ENCODE measurements at regions of chr15 and their contacts with region 1.

Region 1: DNA sequence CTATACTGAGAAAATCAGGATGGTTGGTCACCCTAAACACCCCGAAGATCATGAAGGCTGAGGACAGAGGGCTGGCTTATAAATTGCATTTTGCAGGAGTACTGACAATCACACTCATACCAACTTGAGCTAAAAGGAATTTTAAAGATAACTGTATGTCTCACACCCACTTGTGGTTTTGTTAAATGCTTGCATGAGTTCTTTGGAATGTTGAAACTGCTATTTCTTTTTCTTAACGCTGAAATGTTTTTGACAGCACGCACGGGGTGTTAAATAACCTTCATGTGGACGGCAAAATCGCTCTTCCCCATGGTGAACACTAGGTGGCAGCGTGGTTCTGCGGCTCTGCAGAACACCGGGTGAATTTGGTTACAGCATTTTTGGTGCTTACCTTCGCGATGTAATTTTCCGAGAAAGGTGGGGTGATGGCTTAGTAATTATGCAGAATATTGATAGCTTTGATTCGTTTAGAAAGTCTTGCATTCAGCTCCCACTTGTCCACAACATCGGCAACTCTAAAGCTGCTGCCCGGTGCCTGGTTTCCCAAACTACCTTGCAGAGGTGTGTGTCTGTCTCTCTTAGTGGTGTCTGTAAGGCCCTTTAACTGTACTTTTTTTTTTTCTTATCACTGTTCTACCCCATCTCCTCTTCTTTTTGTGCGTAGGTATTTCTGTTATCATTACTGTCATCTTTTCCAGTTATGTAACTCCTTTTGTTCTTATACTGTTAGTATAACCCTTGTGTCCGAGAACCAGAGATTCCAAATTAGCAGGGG is 51.7 kb downstream of the ARNT2 start:
- DNase-seq: peak; percentile 67 to 92
- H3K4me3 ChIP-seq: no peak overlapping the region
- H3K27ac ChIP-seq: peak overlapping the region; percentile 33; the same call in 1 of the 2 replicates
- H3K4me1 ChIP-seq: peaks cover 23% of the 10 kb centered on the region
- H3K27me3 ChIP-seq: no peaks in the 10 kb centered on the region
- CTCF ChIP-seq: peak; percentile 94

Region 2: DNA sequence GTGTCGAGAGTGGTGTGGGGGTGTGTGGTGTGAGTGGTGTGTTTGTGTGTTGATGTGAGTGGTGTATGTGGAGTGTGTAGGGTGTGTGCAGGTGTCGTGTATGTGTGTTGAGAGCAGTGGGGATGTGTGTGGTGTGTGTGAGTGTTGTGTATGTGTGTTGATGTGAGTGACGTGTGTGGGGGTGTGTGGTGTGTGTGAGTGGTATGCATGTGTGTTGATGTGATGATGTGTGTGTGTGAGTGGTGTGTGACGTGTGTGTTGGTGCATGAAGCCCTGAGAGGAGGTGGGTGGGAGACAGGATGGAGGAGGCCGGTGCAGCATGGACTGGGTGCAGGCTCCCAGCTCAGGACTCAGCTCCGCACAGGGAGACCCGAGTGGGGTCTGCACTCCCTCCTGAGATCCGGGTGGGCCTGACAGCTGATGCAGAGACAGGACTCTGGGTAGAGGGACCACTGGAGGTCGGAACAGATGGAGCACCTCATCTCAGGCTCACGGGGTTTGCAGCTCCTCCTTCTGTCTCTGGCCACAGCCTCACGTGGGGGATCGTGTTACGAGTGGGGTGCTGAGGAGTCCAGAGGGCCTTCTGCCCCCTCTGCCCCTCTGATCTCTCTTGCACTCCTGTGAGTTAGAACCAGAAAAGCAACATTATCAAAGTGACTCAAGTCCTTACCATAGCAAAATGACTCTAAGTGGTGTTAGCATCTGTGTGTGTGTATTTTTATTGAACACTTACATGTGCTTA is 10.4 kb before region 1 on chr15:
- CTCF ChIA-PET with region 1: no interaction called
- POLR2A ChIA-PET with region 1: no interaction called
- intact Hi-C with region 1: no loop called
- DNase-seq: no peak
- H3K4me3 ChIP-seq: no peak overlapping the region
- H3K27ac ChIP-seq: no peak overlapping the region
- H3K4me1 ChIP-seq: peaks cover 5% of the 10 kb centered on the region; the same call in 1 of the 2 replicates
- H3K27me3 ChIP-seq: no peaks in the 10 kb centered on the region
- CTCF ChIP-seq: no peak

Region 3: GRCh38 chr15:80512726-80513660 is 57.1 kb after region 1 on chr15:
- CTCF ChIA-PET with region 1: no interaction called
- POLR2A ChIA-PET with region 1: no interaction called
- intact Hi-C with region 1: loop called (anchors 5 kb)
- DNase-seq: peak in 1 of 2 experiments; percentile 2
- H3K4me3 ChIP-seq: no peak overlapping the region
- H3K27ac ChIP-seq: no peak overlapping the region
- H3K4me1 ChIP-seq: no peaks in the 10 kb centered on the region
- H3K27me3 ChIP-seq: peaks cover 9% of the 10 kb centered on the region; the same call in 1 of the 2 replicates
- CTCF ChIP-seq: peak; percentile 58; the same call in 1 of the 2 replicates

Region 4: GRCh38 chr15:80588801-80589200 is 132.9 kb after region 1 on chr15:
- CTCF ChIA-PET with region 1: interaction called, 4 read pairs
- POLR2A ChIA-PET with region 1: interaction called, 7 read pairs
- intact Hi-C with region 1: loop called (anchors 1 kb)
- DNase-seq: peak; percentile 34 to 99
- H3K4me3 ChIP-seq: no peak overlapping the region
- H3K27ac ChIP-seq: peak overlapping the region; percentile 90
- H3K4me1 ChIP-seq: peaks cover 51% of the 10 kb centered on the region
- H3K27me3 ChIP-seq: no peaks in the 10 kb centered on the region
- CTCF ChIP-seq: no peak

Region 5: GRCh38 chr15:80776420-80777045 is 320.7 kb after region 1 on chr15:
- CTCF ChIA-PET with region 1: interaction called, 3 read pairs
- POLR2A ChIA-PET with region 1: interaction called, 3 read pairs
- intact Hi-C with region 1: loop called (anchors 1 kb)
- DNase-seq: peak in 1 of 2 experiments; percentile 14
- H3K4me3 ChIP-seq: no peak overlapping the region
- H3K27ac ChIP-seq: peak overlapping the region; percentile 90
- H3K4me1 ChIP-seq: peaks cover 50% of the 10 kb centered on the region
- H3K27me3 ChIP-seq: no peaks in the 10 kb centered on the region
- CTCF ChIP-seq: peak; percentile 66

Region 6: DNA sequence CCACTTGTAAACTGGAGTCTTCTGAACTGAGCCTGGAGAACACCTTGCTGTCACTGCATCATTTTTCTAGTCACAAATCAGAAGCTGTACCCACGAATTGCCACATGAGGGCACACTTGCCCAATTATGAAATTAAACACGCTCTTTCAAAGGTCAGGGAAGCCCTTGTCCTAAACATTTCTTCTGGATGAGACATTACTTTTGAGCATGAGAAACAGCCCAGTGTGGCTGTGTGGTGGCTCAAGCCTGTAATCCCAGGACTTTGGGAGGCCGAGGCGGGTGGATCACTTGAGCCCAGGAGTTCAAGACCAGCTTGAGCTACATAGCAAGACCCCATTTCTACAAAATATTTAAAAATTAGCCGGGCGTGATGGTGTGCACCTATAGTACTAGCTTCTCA is 650.7 kb after region 1 on chr15:
- CTCF ChIA-PET with region 1: no interaction called
- POLR2A ChIA-PET with region 1: no interaction called
- intact Hi-C with region 1: loop called (anchors 5 kb)
- DNase-seq: peak; percentile 48
- H3K4me3 ChIP-seq: no peak overlapping the region
- H3K27ac ChIP-seq: no peak overlapping the region
- H3K4me1 ChIP-seq: no peaks in the 10 kb centered on the region
- H3K27me3 ChIP-seq: peaks cover 17% of the 10 kb centered on the region; the same call in 1 of the 2 replicates
- CTCF ChIP-seq: peak; percentile 78

Measured in PC-9 (cell line).